ENCODE measurements at regions of chr11 and their contacts with region 1.

Region 1: GRCh38 chr11:130522284-130522961 is 74.0 kb downstream of the ADAMTS15 start:
- DNase-seq: peak; percentile 92
- ATAC-seq: peak; percentile 95

Region 2: GRCh38 chr11:131874070-131874469 is 1351.6 kb after region 1 on chr11:
- intact Hi-C with region 1: loop called (anchors 5 kb)
- DNase-seq: no peak
- ATAC-seq: no peak

Measured in sciatic nerve (tissue), 2 donors.